T-cell (primary cell): ENCODE measurements at regions of chr13 and their contacts with region 1.

Region 1: DNA sequence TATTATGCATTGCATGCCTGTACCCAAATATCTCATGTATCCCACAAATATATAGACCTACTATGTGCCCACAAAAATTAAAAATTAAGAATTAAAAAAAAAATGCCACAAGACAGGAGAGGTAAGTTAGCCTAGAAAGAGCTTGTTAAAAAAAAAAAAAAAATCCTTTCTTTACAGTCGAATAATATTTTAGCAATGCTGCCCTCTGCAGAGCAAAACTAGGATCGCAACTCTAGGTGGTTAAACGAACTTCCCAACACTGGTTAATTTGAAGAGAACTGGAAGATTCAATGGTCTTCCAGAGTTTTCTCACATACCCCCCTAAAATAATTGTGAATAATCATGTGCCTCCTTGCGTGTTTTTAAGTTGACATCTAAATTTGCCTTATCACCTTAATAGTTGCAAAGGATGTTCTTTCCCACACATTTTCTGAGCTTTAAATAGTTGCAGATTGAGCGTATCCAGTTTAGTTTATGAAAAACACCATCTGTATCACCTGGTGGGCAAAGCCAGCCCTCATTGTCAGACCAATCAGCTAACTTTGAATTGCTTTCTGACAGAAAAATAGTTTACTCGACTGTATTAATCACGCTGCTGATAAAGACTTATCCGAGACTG is 47.4 kb upstream of the RCBTB2 start:
- DNase-seq: peak; percentile 9 to 86 (median 63)
- ATAC-seq: peak in 3 of 4 experiments; percentile 56 to 70 (median 62)
- H3K4me3 ChIP-seq: no peak overlapping the region
- H3K4me3 Mint-ChIP-seq: no peak overlapping the region
- H3K27ac ChIP-seq: no peak overlapping the region
- H3K27ac Mint-ChIP-seq: no peak overlapping the region
- H3K4me1 ChIP-seq: peaks cover 0 to 5% of the 10 kb centered on the region in 2 experiments
- H3K4me1 Mint-ChIP-seq: peaks cover 7 to 24% (median 7%) of the 10 kb centered on the region in 3 donors
- H3K27me3 ChIP-seq: peaks cover 0 to 4% of the 10 kb centered on the region in 2 experiments
- H3K27me3 Mint-ChIP-seq: peaks cover 0 to 11% of the 10 kb centered on the region in 2 donors

Region 2: DNA sequence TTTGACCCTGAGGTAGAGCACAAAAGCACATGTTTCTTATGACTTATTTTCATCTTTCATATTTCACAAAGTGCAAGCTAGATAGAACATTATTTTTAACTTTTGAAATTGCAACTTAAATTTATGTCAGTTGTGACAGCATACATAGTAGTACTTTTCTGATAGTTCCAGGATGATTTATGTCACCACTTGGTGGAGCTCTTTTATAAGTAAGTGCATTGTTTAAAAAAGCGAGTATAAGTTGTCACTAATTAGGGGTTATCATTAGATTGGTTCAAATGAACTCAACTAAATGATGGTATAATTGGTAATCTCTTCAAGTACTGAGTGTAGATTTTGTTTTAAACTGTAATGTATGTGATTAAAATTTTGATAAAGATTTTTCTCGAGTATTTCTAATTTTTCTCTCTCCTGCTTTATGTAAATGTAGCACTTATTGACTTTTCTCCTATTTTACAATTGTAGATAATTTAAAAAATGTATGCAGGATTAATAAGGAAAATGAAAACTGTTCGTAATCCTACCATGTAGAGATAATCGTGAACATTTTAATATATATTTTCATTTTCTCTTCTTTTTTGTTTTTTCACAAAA is 245.7 kb before region 1 on chr13:
- CTCF ChIA-PET with region 1: interaction called, 63 to 183 read pairs
- POLR2A ChIA-PET with region 1: interaction called, 3 to 4 read pairs
- DNase-seq: peak in 1 of 35 experiments; percentile 72
- ATAC-seq: peak; percentile 45 to 82 (median 64)
- H3K4me3 ChIP-seq: no peak overlapping the region
- H3K4me3 Mint-ChIP-seq: no peak overlapping the region
- H3K27ac ChIP-seq: no peak overlapping the region
- H3K27ac Mint-ChIP-seq: peak overlapping the region in 1 of 2 donors; percentile 24
- H3K4me1 ChIP-seq: no peaks in the 10 kb centered on the region
- H3K4me1 Mint-ChIP-seq: peaks cover 7 to 21% (median 17%) of the 10 kb centered on the region in 3 donors
- H3K27me3 ChIP-seq: no peaks in the 10 kb centered on the region
- H3K27me3 Mint-ChIP-seq: no peaks in the 10 kb centered on the region

Region 3: GRCh38 chr13:48505597-48506091 is 74.7 kb before region 1 on chr13:
- CTCF ChIA-PET with region 1: interaction called in 1 of 2 experiments, 14 read pairs
- POLR2A ChIA-PET with region 1: no interaction called
- DNase-seq: peak in 33 of 35 experiments; percentile 28 to 89 (median 55)
- ATAC-seq: peak; percentile 92 to 95 (median 94)
- H3K4me3 ChIP-seq: peak overlapping the region; percentile 8 to 52
- H3K4me3 Mint-ChIP-seq: peak overlapping the region; percentile 59 to 81 (median 72)
- H3K27ac ChIP-seq: peak overlapping the region; percentile 70
- H3K27ac Mint-ChIP-seq: peak overlapping the region; percentile 94 to 98
- H3K4me1 ChIP-seq: peaks cover 24 to 39% of the 10 kb centered on the region in 2 experiments
- H3K4me1 Mint-ChIP-seq: peaks cover 52 to 81% (median 71%) of the 10 kb centered on the region in 3 donors
- H3K27me3 ChIP-seq: no peaks in the 10 kb centered on the region
- H3K27me3 Mint-ChIP-seq: no peaks in the 10 kb centered on the region

Region 4: DNA sequence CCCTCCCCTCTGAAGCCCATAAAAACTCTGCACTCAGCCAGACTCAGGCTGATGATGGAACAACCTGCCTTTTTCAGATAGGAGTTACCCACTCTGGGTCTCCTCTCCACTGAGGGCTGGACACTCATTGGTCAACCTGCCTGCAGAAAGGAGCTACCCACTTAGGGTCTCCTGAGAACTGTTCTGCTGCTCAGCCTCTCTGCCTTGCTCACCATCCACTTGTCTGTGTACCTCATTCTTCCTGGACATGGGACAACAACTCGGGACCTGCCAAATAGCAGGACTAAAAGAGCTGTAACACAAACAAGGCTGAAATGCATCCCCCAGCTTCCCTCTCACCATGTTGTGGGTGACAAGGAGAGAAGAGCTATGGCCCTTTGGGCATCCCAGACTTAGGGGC is 29.0 kb before region 1 on chr13:
- CTCF ChIA-PET with region 1: no interaction called
- POLR2A ChIA-PET with region 1: no interaction called
- DNase-seq: no peak
- ATAC-seq: no peak
- H3K4me3 ChIP-seq: no peak overlapping the region
- H3K4me3 Mint-ChIP-seq: no peak overlapping the region
- H3K27ac ChIP-seq: no peak overlapping the region
- H3K27ac Mint-ChIP-seq: no peak overlapping the region
- H3K4me1 ChIP-seq: no peaks in the 10 kb centered on the region
- H3K4me1 Mint-ChIP-seq: no peaks in the 10 kb centered on the region
- H3K27me3 ChIP-seq: peaks cover 3 to 8% of the 10 kb centered on the region in 2 experiments
- H3K27me3 Mint-ChIP-seq: peaks cover 0 to 2% of the 10 kb centered on the region in 2 donors

Region 5: DNA sequence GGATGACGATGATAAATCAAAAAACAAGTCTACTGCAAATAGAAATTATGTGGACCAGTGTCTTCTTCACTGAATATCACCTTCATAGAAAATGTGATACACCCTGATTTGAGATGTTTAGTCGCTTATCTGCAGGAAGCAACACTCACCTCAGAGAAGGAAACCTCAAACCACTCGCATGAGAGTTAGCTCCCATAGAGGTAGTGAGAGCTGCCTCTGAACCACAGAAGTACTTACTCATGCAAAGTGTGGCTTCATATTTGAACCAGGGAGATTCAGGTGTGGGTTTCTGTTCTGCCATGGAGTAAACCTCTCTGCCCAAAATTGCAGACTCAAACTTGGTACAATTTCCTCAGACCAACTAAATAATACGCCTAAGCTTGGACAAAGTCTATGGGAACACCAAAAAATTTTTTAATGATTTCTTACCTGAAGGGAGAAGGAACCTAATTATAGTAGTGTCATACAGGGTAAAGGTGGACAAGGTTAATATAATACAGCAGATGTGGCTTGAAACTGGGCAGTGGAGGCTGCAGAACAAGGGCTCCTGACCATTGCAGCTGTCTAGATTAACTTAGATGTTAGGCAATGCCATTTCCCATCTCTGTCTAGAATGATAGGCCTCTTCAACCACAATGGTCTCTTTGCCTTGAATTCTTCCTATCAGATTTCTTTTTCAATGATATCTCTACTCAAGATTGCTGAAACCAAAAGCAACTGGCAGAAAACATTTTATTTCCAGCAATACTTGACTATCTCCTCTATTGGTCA is 17.8 kb before region 1 on chr13:
- CTCF ChIA-PET with region 1: interaction called in 1 of 2 experiments, 34 read pairs
- POLR2A ChIA-PET with region 1: interaction called in 1 of 2 experiments, 3 read pairs
- DNase-seq: peak; percentile 10 to 90 (median 60)
- ATAC-seq: peak; percentile 99 to 100 (median 100)
- H3K4me3 ChIP-seq: peak overlapping the region in 1 of 2 donors; percentile 6
- H3K4me3 Mint-ChIP-seq: peak overlapping the region; percentile 25 to 49 (median 27)
- H3K27ac ChIP-seq: peak overlapping the region; percentile 37
- H3K27ac Mint-ChIP-seq: peak overlapping the region; percentile 73 to 85
- H3K4me1 ChIP-seq: peaks cover 15 to 21% of the 10 kb centered on the region in 2 experiments
- H3K4me1 Mint-ChIP-seq: peaks cover 46 to 61% (median 59%) of the 10 kb centered on the region in 3 donors
- H3K27me3 ChIP-seq: peaks cover 2 to 6% of the 10 kb centered on the region in 2 experiments
- H3K27me3 Mint-ChIP-seq: peaks cover 21 to 27% of the 10 kb centered on the region in 2 donors

Region 6: DNA sequence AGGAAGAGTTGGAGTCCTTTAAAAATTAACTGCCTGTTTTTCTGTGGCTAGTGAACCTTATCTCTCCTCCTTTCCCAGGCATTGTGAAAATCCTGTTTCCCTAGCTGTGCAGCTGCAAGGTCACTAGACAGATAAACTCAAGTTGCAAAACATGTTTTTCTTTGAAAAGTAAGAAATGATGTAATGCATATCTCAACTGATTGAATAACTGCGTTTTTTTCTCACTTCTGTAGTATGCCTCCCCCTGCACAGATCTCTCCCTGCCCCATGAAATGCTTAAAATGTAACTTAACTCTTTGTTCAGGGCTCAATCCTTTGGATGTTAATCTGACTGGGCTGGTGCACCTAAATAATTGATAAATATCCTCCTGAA is 45.8 kb after region 1 on chr13:
- CTCF ChIA-PET with region 1: no interaction called
- POLR2A ChIA-PET with region 1: no interaction called
- DNase-seq: no peak
- ATAC-seq: no peak
- H3K4me3 ChIP-seq: no peak overlapping the region
- H3K4me3 Mint-ChIP-seq: no peak overlapping the region
- H3K27ac ChIP-seq: no peak overlapping the region
- H3K27ac Mint-ChIP-seq: no peak overlapping the region
- H3K4me1 ChIP-seq: no peaks in the 10 kb centered on the region
- H3K4me1 Mint-ChIP-seq: no peaks in the 10 kb centered on the region
- H3K27me3 ChIP-seq: no peaks in the 10 kb centered on the region
- H3K27me3 Mint-ChIP-seq: no peaks in the 10 kb centered on the region

Region 7: GRCh38 chr13:48797761-48798160 is 217.5 kb after region 1 on chr13:
- CTCF ChIA-PET with region 1: no interaction called
- POLR2A ChIA-PET with region 1: no interaction called
- DNase-seq: no peak
- ATAC-seq: no peak
- H3K4me3 ChIP-seq: no peak overlapping the region
- H3K4me3 Mint-ChIP-seq: no peak overlapping the region
- H3K27ac ChIP-seq: no peak overlapping the region
- H3K27ac Mint-ChIP-seq: no peak overlapping the region
- H3K4me1 ChIP-seq: no peaks in the 10 kb centered on the region
- H3K4me1 Mint-ChIP-seq: no peaks in the 10 kb centered on the region
- H3K27me3 ChIP-seq: no peaks in the 10 kb centered on the region
- H3K27me3 Mint-ChIP-seq: peaks cover 0 to 5% of the 10 kb centered on the region in 2 donors

Region 8: GRCh38 chr13:49814551-49815270 is 1234.4 kb after region 1 on chr13:
- CTCF ChIA-PET with region 1: no interaction called
- POLR2A ChIA-PET with region 1: no interaction called
- DNase-seq: no peak
- ATAC-seq: no peak
- H3K4me3 ChIP-seq: no peak overlapping the region
- H3K4me3 Mint-ChIP-seq: no peak overlapping the region
- H3K27ac ChIP-seq: no peak overlapping the region
- H3K27ac Mint-ChIP-seq: no peak overlapping the region
- H3K4me1 ChIP-seq: no peaks in the 10 kb centered on the region
- H3K4me1 Mint-ChIP-seq: no peaks in the 10 kb centered on the region
- H3K27me3 ChIP-seq: peaks cover 0 to 5% of the 10 kb centered on the region in 2 experiments
- H3K27me3 Mint-ChIP-seq: peaks cover 8 to 17% of the 10 kb centered on the region in 2 donors